Posterior vena cava (tissue), 2 donors: ENCODE measurements at regions of chr5 and their contacts with region 1.

Region 1: GRCh38 chr5:55994574-55995333 is at the start of gene IL6ST:
- DNase-seq: peak; percentile 99
- total RNA-seq, gene IL6ST: 359 to 375 TPM

Region 2: GRCh38 chr5:55570026-55570425 is 424.7 kb before region 1 on chr5:
- intact Hi-C with region 1: loop called in 1 of 2 experiments (anchors 5 kb)
- DNase-seq: no peak

Region 3: DNA sequence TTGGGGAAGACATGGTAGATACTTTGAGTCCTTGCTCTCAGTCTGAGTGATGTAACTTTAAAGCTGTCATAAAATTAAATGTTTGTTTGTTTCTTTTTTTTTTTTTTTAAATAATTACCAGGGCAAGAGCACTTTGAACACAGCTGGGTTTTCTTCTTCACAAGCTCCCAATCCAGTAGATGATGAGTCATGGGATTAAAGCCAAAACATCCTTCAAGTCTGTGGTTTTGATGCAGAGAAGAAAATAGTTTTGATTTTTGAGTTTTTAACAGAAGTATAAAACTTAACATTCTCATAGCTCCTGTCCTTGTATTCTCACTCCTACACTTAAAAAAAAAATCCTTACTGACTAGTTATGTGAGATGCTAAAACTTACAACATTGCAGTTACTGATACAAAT is 178.4 kb before region 1 on chr5:
- intact Hi-C with region 1: no loop called
- DNase-seq: no peak

Region 4: DNA sequence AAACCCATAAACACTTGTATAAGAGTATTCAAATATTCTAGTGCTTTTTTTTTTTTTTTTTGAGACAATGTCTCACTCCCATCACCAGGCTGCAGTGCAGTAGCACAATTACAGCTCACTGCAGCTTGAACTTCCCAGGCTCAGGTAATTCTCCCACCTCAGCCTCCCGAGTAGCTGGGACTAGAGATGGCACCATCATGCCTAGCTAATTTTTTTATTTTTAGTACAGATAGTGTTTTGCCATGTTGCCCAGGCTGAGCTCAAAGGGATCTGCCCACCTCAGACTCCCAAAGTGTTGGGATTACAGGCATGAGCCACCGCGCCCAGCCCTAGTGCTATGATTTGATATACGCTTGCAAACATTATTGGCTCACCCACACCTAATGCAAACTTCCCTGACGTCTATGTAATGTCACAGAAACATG is 11.8 kb before region 1 on chr5:
- intact Hi-C with region 1: no loop called
- DNase-seq: no peak

Region 5: DNA sequence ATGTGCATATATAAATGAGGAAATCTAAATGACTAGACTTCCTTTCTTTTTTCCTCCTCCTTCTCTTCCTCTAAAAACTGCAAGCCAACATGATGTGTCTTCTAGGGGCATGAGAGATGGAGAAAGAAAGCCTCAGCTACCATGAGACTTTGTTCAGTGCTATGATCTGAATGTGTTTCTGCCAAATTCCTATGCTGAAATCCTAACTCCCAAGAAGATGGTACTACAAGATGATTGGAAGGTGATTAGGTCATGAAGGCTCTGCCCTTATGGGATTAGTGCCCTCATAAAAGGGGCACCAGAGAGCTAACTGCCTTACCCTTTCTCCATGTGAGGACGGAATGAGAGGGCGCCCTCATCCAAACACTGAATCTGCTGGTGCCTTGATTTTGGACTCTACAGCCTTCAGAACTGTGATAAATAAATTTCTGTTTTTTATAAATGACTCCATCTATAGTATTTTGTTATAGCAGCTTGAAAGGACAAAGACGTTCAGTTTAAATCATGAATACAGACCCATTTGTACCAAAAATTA is 72.2 kb after region 1 on chr5:
- intact Hi-C with region 1: loop called in 1 of 2 experiments (anchors 2 kb)
- DNase-seq: no peak